ENCODE measurements at regions of chr3 and their contacts with region 1.

Region 1: GRCh38 chr3:9884555-9885165 is 4.6 kb upstream of the CIDEC start:
- DNase-seq: peak; percentile 57
- H3K4me3 ChIP-seq: no peak overlapping the region
- H3K27ac ChIP-seq: peak overlapping the region; percentile 7 to 50
- H3K4me1 ChIP-seq: no peaks in the 10 kb centered on the region
- H3K27me3 ChIP-seq: no peaks in the 10 kb centered on the region
- CTCF ChIP-seq: no peak
- POLR2A ChIP-seq: no peak

Region 2: DNA sequence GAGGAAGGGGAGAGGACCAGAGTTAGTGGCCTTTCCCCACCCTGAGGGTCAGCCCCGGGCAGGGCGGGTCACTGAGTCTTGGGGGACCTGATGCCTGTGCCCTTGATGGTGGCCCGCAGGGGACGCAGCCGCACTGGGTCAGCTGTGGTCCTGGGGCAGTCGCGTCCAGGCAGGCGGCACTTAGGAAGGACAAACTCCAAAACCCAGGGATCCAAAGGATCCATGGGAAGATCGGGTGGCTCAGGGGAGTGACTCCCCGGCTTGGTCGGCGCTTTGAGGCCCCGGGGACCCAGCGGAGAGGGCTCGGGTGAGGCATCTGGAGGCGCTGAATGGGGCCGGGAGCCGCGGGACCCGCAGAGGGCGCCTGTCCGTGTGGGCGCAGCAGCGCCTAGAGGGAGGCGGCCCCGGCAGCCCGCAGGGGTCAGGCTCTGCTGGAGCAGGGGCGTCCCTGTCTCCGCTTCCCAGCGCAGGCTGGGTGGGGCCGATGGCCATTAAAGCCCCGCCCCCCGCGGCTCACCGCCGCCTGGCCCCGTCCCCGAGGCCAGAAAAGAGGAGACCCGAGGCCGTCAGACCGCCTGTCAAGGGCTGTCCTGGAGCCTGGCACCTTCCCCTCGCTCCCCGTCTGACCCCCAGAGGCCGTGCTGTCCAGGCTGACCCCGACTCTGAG is 22.1 kb before region 1 on chr3:
- intact Hi-C with region 1: loop called (anchors 1 kb)
- DNase-seq: no peak
- H3K4me3 ChIP-seq: peak overlapping the region; percentile 12 to 23
- H3K27ac ChIP-seq: peak overlapping the region; percentile 35 to 50
- H3K4me1 ChIP-seq: no peaks in the 10 kb centered on the region
- H3K27me3 ChIP-seq: no peaks in the 10 kb centered on the region
- CTCF ChIP-seq: peak in 3 of 4 experiments; percentile 7 to 36 (median 31)
- POLR2A ChIP-seq: no peak

Region 3: GRCh38 chr3:10198761-10199649 is 314.3 kb after region 1 on chr3:
- intact Hi-C with region 1: no loop called
- DNase-seq: peak; percentile 64
- H3K4me3 ChIP-seq: no peak overlapping the region
- H3K27ac ChIP-seq: peak overlapping the region; percentile 15 to 28
- H3K4me1 ChIP-seq: peaks cover 15% of the 10 kb centered on the region
- H3K27me3 ChIP-seq: no peaks in the 10 kb centered on the region
- CTCF ChIP-seq: no peak
- POLR2A ChIP-seq: no peak

Measured in prostate gland (tissue), 2 donors.